ENCODE measurements at regions of chr7 and their contacts with region 1.

Region 1: DNA sequence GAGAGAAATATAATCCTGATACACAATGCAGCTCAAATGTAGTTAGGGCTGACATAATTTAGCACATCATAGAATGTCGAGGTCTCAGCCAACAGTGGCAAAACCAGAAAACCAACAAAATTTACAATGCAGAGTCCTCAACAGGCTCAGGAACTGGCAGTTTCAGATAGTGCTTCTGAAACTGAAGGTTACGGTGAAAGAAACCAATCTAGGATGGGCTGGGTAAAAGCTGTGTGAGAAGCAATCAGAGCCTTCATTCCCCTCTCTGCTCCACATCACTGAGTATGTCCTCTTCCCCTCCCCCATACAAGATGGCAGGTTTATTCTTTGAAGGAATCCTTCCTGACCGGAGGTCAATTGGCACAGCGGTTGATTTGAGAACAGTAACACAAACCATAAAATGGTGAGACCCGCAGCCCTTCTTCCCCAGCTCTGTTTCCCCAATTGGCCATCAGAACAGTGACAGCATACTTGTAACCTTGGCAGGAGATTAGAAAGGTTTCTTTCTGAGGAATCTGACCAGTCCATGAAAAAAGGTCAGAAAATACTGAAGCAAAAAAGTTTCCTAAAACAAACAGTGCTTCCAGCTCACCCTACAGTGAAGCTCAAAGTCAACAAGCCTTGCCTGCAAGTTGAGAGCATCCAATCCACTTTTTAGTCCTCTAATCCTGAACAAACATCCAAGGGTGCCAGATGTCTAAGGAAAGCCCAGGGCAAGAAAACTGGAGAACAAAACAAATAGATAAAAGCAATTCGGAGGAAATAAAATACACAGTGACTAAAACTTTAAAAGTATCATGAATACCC is 54.0 kb upstream of the IL6 start:
- DNase-seq: peak; percentile 73
- H3K4me3 Mint-ChIP-seq: peak overlapping the region; percentile 26
- H3K27ac Mint-ChIP-seq: no peak overlapping the region
- H3K4me1 Mint-ChIP-seq: peaks cover 55% of the 10 kb centered on the region
- H3K27me3 Mint-ChIP-seq: peaks cover 8% of the 10 kb centered on the region

Region 2: DNA sequence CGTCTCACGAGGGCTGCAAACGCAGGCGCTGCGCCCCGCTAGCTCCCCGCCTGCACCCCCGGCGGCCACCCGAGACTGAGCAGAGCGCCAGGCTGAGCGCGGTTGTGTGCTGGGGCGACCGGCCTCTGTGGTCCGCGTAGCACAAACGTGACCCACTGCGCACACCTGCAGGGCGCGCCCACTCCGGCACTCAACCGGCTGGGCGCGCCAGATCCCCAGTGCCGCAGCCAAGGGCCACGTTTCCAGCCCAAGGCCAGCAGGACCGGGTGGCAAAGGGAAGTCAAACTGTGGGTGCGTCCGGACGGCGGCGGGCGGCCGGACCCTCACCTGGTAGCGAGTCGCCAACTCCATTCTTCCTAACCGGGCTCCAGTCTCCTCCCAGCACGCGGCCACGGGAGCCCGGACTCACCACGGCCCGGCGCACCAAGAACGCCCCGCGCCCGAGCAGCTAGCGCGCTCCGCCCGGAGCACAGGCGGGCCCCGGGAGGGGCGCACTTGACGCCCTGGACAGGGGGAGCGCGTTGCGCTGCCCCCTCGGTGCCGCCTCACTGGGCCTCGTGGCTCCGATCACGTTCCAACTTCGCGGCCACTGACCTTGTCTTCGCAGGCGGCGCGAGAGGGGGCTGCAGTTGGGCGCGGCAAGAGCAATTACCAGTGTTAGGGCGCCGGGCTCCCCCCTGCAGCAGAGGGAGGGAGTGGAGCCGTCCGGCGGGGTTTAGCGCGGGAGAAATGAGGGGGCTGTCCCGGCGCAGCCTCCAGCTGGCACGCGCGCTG is 727.4 kb before region 1 on chr7 and contains the start of gene CDCA7L:
- intact Hi-C with region 1: loop called (anchors 10 kb)
- DNase-seq: peak; percentile 90
- H3K4me3 Mint-ChIP-seq: peak within 1 kb of the TSS; percentile 96
- H3K27ac Mint-ChIP-seq: peak within 1 kb of the TSS; percentile 95
- H3K4me1 Mint-ChIP-seq: peaks cover 60% of the 10 kb centered on the region
- H3K27me3 Mint-ChIP-seq: peaks cover 16% of the 10 kb centered on the region
- total RNA-seq, gene CDCA7L: 111 and 114 TPM in 2 replicates

Region 3: GRCh38 chr7:21966271-21966670 is 706.8 kb before region 1 on chr7:
- intact Hi-C with region 1: no loop called
- DNase-seq: no peak
- H3K4me3 Mint-ChIP-seq: no peak overlapping the region
- H3K27ac Mint-ChIP-seq: no peak overlapping the region
- H3K4me1 Mint-ChIP-seq: peaks cover 4% of the 10 kb centered on the region
- H3K27me3 Mint-ChIP-seq: peaks cover 4% of the 10 kb centered on the region

Region 4: DNA sequence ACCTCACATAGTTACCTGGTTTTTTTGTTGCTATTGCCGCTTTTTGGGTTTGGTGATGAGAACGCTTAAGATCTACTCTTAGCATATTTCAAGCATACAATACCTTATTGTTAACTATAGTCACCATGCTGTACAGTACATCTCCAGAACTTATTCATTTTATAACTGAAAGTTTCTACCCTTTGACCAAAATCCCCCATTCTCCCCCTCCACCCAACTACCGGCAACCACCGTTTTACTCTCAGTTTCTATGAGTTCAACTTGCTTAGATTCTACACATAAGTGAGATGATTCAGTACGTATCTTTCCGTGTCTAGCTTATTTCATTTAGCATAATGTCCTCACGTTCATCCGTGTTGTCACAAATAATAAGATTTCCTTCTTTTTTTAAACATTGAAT is 32.8 kb before region 1 on chr7:
- intact Hi-C with region 1: loop called (anchors 1 kb)
- DNase-seq: peak; percentile 74
- H3K4me3 Mint-ChIP-seq: no peak overlapping the region
- H3K27ac Mint-ChIP-seq: no peak overlapping the region
- H3K4me1 Mint-ChIP-seq: peaks cover 10% of the 10 kb centered on the region
- H3K27me3 Mint-ChIP-seq: peaks cover 30% of the 10 kb centered on the region

Region 5: GRCh38 chr7:22660732-22661131 is 12.3 kb before region 1 on chr7:
- intact Hi-C with region 1: loop called (anchors 2 kb)
- DNase-seq: no peak
- H3K4me3 Mint-ChIP-seq: no peak overlapping the region
- H3K27ac Mint-ChIP-seq: no peak overlapping the region
- H3K4me1 Mint-ChIP-seq: peaks cover 22% of the 10 kb centered on the region
- H3K27me3 Mint-ChIP-seq: peaks cover 39% of the 10 kb centered on the region

Region 6: GRCh38 chr7:22726345-22727185 is 53.5 kb after region 1 on chr7:
- intact Hi-C with region 1: loop called (anchors 5 kb)
- DNase-seq: peak; percentile 87
- H3K4me3 Mint-ChIP-seq: peak overlapping the region; percentile 68
- H3K27ac Mint-ChIP-seq: peak overlapping the region; percentile 19
- H3K4me1 Mint-ChIP-seq: peaks cover 32% of the 10 kb centered on the region
- H3K27me3 Mint-ChIP-seq: peaks cover 30% of the 10 kb centered on the region

Measured in activated CD4-positive, alpha-beta T cell treated with anti-CD3 and anti-CD28 coated beads, Interleukin-2, amount 10 ng/mL, durations not matched to agents 24 days and 14 days (primary cell).